ENCODE measurements at regions of chr9 and their contacts with region 1.

Region 1: GRCh38 chr9:6449645-6450044 is 36.6 kb downstream of the UHRF2 start:
- DNase-seq: no peak
- ATAC-seq: peak; percentile 12
- H3K4me3 Mint-ChIP-seq: no peak overlapping the region
- H3K27ac Mint-ChIP-seq: peak overlapping the region; percentile 64
- H3K4me1 Mint-ChIP-seq: peaks cover 54% of the 10 kb centered on the region
- H3K27me3 Mint-ChIP-seq: no peaks in the 10 kb centered on the region

Region 2: GRCh38 chr9:5205071-5205470 is 1244.6 kb before region 1 on chr9:
- CTCF ChIA-PET with region 1: no interaction called
- POLR2A ChIA-PET with region 1: no interaction called
- intact Hi-C with region 1: no loop called
- DNase-seq: no peak
- ATAC-seq: peak; percentile 57
- H3K4me3 Mint-ChIP-seq: no peak overlapping the region
- H3K27ac Mint-ChIP-seq: no peak overlapping the region
- H3K4me1 Mint-ChIP-seq: peaks cover 6% of the 10 kb centered on the region
- H3K27me3 Mint-ChIP-seq: no peaks in the 10 kb centered on the region

Region 3: GRCh38 chr9:5857928-5858327 is 591.7 kb before region 1 on chr9:
- CTCF ChIA-PET with region 1: no interaction called
- POLR2A ChIA-PET with region 1: no interaction called
- intact Hi-C with region 1: no loop called
- DNase-seq: no peak
- ATAC-seq: no peak
- H3K4me3 Mint-ChIP-seq: no peak overlapping the region
- H3K27ac Mint-ChIP-seq: no peak overlapping the region
- H3K4me1 Mint-ChIP-seq: peaks cover 19% of the 10 kb centered on the region
- H3K27me3 Mint-ChIP-seq: no peaks in the 10 kb centered on the region

Region 4: GRCh38 chr9:6418764-6419163 is 30.9 kb before region 1 on chr9:
- CTCF ChIA-PET with region 1: no interaction called
- POLR2A ChIA-PET with region 1: no interaction called
- intact Hi-C with region 1: loop called in 1 of 2 experiments (anchors 2 kb)
- DNase-seq: no peak
- ATAC-seq: peak; percentile 22
- H3K4me3 Mint-ChIP-seq: peak overlapping the region; percentile 49
- H3K27ac Mint-ChIP-seq: peak overlapping the region; percentile 92
- H3K4me1 Mint-ChIP-seq: peaks cover 65% of the 10 kb centered on the region
- H3K27me3 Mint-ChIP-seq: no peaks in the 10 kb centered on the region